K562 (cell line): ENCODE measurements at regions of chr1 and their contacts with region 1.

Region 1: DNA sequence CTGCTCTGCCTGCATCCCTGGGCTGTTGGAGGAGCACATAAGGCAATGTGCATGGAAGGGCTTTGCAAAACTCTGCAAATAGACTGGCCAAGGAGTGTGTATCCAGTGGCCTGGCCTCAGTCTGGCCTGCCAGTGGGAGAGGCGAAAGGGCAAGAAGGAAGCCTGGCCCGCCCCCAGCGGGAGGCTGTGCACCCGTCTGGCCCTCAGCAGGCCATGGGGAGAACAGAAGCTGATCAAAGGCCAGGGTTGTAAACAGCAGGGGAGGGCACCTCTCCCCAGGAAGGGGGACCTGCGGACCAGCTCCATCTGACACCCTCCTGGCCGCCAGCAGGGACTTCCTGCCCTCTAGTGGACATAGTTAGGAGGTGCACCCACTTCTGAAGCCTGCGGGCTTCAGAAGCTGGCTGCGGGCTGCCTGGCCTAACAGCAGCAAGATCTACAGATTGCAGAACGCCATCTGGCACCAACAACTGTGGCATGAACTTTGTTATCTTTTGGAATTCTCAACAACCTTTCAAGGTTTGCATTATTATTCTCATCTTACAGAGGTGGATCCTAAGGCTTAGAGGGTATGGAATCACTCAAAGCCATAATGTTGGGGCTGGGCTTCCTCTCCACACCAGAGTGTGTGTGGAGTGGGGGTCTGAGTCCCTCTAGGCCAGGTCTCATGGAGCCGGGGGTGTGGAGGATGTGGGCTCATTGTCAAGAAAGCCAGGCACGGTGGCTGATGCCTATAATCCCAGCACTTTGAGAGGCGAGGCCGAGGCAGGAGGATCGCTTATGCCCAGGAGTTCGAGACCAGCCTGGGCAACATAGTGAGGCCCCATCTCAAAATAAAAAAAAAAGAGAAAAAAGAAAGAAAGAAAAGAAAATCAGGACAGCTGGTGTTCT is 18.9 kb upstream of the CDK18 start:
- DNase-seq: peak; percentile 83 to 97 (median 94)
- ATAC-seq: peak; percentile 90
- H3K4me3 ChIP-seq: no peak overlapping the region
- H3K27ac ChIP-seq: no peak overlapping the region
- H3K4me1 ChIP-seq: peaks cover 0 to 4% of the 10 kb centered on the region in 2 experiments; a peak in 1 of 5 replicates
- H3K27me3 ChIP-seq: peaks cover 30 to 58% of the 10 kb centered on the region in 2 experiments
- CTCF ChIP-seq: peak; percentile 97 to 98 (median 98)
- EP300 ChIP-seq: no peak
- POLR2A ChIP-seq: no peak
- RAD21 ChIP-seq: peak; percentile 94 to 98

Region 2: GRCh38 chr1:205273551-205273982 is 212.0 kb before region 1 on chr1:
- CTCF ChIA-PET with region 1: no interaction called
- POLR2A ChIA-PET with region 1: no interaction called
- in situ Hi-C with region 1: no loop called
- intact Hi-C with region 1: loop called (anchors 1 kb)
- DNase-seq: peak; percentile 88 to 92 (median 90)
- ATAC-seq: peak; percentile 94
- H3K4me3 ChIP-seq: no peak overlapping the region
- H3K27ac ChIP-seq: no peak overlapping the region
- H3K4me1 ChIP-seq: peaks cover 6 to 29% of the 10 kb centered on the region in 2 experiments
- H3K27me3 ChIP-seq: peaks cover 1 to 13% of the 10 kb centered on the region in 2 experiments; a peak in 4 of 5 replicates
- CTCF ChIP-seq: peak; percentile 96 to 99 (median 98)
- EP300 ChIP-seq: 0 out of 2 replicates have a peak, but pooled peaks have one; percentile 12
- POLR2A ChIP-seq: no peak
- RAD21 ChIP-seq: peak; percentile 99

Region 3: GRCh38 chr1:205335643-205336091 is 149.9 kb before region 1 on chr1:
- CTCF ChIA-PET with region 1: interaction called, 14 read pairs
- POLR2A ChIA-PET with region 1: no interaction called
- in situ Hi-C with region 1: no loop called
- intact Hi-C with region 1: loop called (anchors 1 kb)
- DNase-seq: peak; percentile 83 to 92 (median 88)
- ATAC-seq: peak; percentile 97
- H3K4me3 ChIP-seq: no peak overlapping the region
- H3K27ac ChIP-seq: no peak overlapping the region
- H3K4me1 ChIP-seq: no peaks in the 10 kb centered on the region
- H3K27me3 ChIP-seq: peaks cover 17 to 62% of the 10 kb centered on the region in 2 experiments
- CTCF ChIP-seq: peak; percentile 99 to 100 (median 99)
- EP300 ChIP-seq: no peak; the same call in 1 of the 2 replicates
- POLR2A ChIP-seq: no peak
- RAD21 ChIP-seq: peak; percentile 77 to 93

Region 4: DNA sequence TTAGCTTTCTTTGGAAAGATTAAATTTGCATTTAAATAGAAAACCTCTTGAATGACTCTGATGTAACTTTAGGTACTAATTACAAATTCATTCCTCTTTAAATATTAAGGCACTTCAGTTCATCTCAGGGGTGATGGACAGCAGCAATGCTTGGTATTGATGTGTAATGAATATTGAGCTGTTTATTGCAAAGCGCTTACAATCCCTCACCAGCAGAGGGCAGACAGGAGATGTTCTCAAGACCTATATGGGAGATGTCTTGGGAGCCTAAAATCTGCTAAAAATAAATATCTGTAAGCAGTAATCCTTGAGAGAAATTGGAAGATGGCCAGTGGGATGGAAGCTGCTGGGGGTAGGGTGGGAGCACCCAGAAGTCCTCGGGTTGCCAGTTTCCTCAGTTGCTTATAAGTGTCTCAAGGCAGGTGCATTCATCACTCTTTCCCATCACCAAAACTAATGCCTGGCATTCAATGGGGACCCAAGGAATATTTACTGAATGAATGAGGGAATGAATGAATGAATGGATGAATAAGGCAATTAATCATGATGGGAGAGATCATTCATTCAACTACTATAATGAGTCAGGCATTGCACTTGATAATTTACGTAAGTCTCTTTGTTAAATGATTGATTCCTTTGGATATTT is 131.2 kb before region 1 on chr1:
- CTCF ChIA-PET with region 1: interaction called, 6 read pairs
- POLR2A ChIA-PET with region 1: interaction called, 4 read pairs
- in situ Hi-C with region 1: loop called (anchors 10 kb)
- intact Hi-C with region 1: loop called (anchors 1 kb)
- DNase-seq: peak; percentile 50 to 79 (median 72)
- ATAC-seq: peak; percentile 89
- H3K4me3 ChIP-seq: no peak overlapping the region
- H3K27ac ChIP-seq: no peak overlapping the region
- H3K4me1 ChIP-seq: peaks cover 0 to 3% of the 10 kb centered on the region in 2 experiments; a peak in 1 of 5 replicates
- H3K27me3 ChIP-seq: peaks cover 39 to 70% of the 10 kb centered on the region in 2 experiments
- CTCF ChIP-seq: peak; percentile 80 to 92 (median 86)
- EP300 ChIP-seq: no peak
- POLR2A ChIP-seq: no peak
- RAD21 ChIP-seq: peak; percentile 67 to 81

Region 5: GRCh38 chr1:205396967-205397616 is 88.5 kb before region 1 on chr1:
- CTCF ChIA-PET with region 1: interaction called, 36 read pairs
- POLR2A ChIA-PET with region 1: interaction called, 6 read pairs
- in situ Hi-C with region 1: loop called (anchors 5 kb)
- intact Hi-C with region 1: loop called (anchors 1 kb)
- DNase-seq: peak; percentile 68 to 76 (median 70)
- ATAC-seq: peak; percentile 86
- H3K4me3 ChIP-seq: no peak overlapping the region
- H3K27ac ChIP-seq: no peak overlapping the region
- H3K4me1 ChIP-seq: no peaks in the 10 kb centered on the region
- H3K27me3 ChIP-seq: no peaks in the 10 kb centered on the region; a peak in 1 of 5 replicates
- CTCF ChIP-seq: peak; percentile 86 to 97 (median 91)
- EP300 ChIP-seq: no peak
- POLR2A ChIP-seq: no peak
- RAD21 ChIP-seq: peak; percentile 94 to 98

Region 6: GRCh38 chr1:205430696-205431305 is 54.8 kb before region 1 on chr1:
- CTCF ChIA-PET with region 1: no interaction called
- POLR2A ChIA-PET with region 1: no interaction called
- in situ Hi-C with region 1: no loop called
- intact Hi-C with region 1: loop called (anchors 2 kb)
- DNase-seq: peak; percentile 77 to 89 (median 82)
- ATAC-seq: peak; percentile 95
- H3K4me3 ChIP-seq: peak overlapping the region; percentile 46
- H3K27ac ChIP-seq: no peak overlapping the region
- H3K4me1 ChIP-seq: peaks cover 6% of the 10 kb centered on the region in 2 experiments; a peak in 4 of 5 replicates
- H3K27me3 ChIP-seq: peaks cover 21 to 60% of the 10 kb centered on the region in 2 experiments; a peak in 4 of 5 replicates
- CTCF ChIP-seq: peak; percentile 92 to 100 (median 93)
- EP300 ChIP-seq: no peak
- POLR2A ChIP-seq: no peak
- RAD21 ChIP-seq: peak; percentile 64 to 73

Region 7: DNA sequence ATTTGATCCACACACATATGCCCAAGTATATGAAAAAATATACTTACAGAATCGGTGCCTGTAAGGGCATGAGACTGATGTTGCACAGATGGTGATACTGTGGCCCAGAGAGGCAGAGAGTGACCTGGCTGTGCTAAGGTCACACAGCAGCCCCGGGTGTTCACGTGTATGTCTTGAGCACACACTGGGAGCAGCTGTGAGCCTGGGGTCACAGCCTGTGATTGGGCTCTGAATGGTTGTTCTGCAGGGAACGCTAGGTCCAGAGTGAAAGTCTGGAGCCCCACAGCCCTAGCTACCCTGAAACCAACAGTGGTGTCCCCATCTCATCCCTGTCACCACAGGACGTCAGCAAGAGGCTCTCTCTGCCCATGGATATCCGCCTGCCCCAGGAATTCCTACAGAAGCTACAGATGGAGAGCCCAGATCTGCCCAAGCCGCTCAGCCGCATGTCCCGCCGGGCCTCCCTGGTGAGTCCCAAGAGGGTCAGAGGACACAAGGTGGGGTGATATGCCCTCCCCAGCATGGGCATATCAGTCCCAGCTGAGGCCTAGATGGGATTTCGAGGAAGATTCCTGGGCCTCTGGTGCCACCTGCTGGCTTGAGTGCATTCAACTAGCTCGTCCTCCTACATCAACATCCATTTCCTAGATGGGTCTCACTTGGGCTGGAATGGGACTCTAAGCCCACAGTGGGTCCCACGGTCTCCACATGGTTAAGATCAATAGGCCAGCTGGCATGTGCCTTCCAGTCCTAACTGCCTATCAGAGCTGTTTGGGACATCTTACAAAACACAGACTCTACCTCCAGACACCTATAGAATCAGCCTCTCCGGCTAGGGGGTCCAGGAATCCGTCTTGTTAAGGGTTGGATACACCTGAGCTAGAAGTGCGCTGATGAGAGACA is 38.6 kb after region 1 on chr1:
- CTCF ChIA-PET with region 1: interaction called, 73 read pairs
- POLR2A ChIA-PET with region 1: interaction called, 3 read pairs
- in situ Hi-C with region 1: loop called (anchors 5 kb)
- intact Hi-C with region 1: loop called (anchors 1 kb)
- DNase-seq: peak; percentile 75 to 85 (median 80)
- ATAC-seq: peak; percentile 79
- H3K4me3 ChIP-seq: no peak overlapping the region
- H3K27ac ChIP-seq: no peak overlapping the region
- H3K4me1 ChIP-seq: peaks cover 0 to 23% of the 10 kb centered on the region in 2 experiments; a peak in 2 of 5 replicates
- H3K27me3 ChIP-seq: peaks cover 25 to 77% of the 10 kb centered on the region in 2 experiments
- CTCF ChIP-seq: peak; percentile 85 to 93 (median 93)
- EP300 ChIP-seq: no peak
- POLR2A ChIP-seq: no peak
- RAD21 ChIP-seq: peak; percentile 95 to 97